Mammary epithelial cell (primary cell): ENCODE measurements at regions of chr1 and their contacts with region 1.

Region 1: GRCh38 chr1:178451529-178451928 is 45.2 kb downstream of the CLEC20A start:
- DNase-seq: no peak
- H3K4me3 ChIP-seq: no peak overlapping the region
- H3K27ac ChIP-seq: no peak overlapping the region
- H3K4me1 ChIP-seq: no peaks in the 10 kb centered on the region
- H3K27me3 ChIP-seq: no peaks in the 10 kb centered on the region
- CTCF ChIP-seq: no peak

Region 2: GRCh38 chr1:178267646-178268094 is 183.9 kb before region 1 on chr1:
- CTCF ChIA-PET with region 1: no interaction called
- dilution Hi-C with region 1: no loop called
- in situ Hi-C with region 1: no loop called
- intact Hi-C with region 1: no loop called
- DNase-seq: peak; percentile 44
- H3K4me3 ChIP-seq: no peak overlapping the region
- H3K27ac ChIP-seq: peak overlapping the region; percentile 52
- H3K4me1 ChIP-seq: peaks cover 52% of the 10 kb centered on the region
- H3K27me3 ChIP-seq: no peaks in the 10 kb centered on the region
- CTCF ChIP-seq: no peak

Region 3: GRCh38 chr1:178371235-178371634 is 80.3 kb before region 1 on chr1:
- CTCF ChIA-PET with region 1: no interaction called
- dilution Hi-C with region 1: loop called (anchors 5 kb)
- in situ Hi-C with region 1: no loop called
- intact Hi-C with region 1: no loop called
- DNase-seq: peak; percentile 12
- H3K4me3 ChIP-seq: peak overlapping the region; percentile 17 to 39 (median 27)
- H3K27ac ChIP-seq: no peak overlapping the region
- H3K4me1 ChIP-seq: no peaks in the 10 kb centered on the region
- H3K27me3 ChIP-seq: no peaks in the 10 kb centered on the region
- CTCF ChIP-seq: no peak